Breast epithelium (tissue), 4 donors: ENCODE measurements at regions of chr10 and their contacts with region 1.

Region 1: DNA sequence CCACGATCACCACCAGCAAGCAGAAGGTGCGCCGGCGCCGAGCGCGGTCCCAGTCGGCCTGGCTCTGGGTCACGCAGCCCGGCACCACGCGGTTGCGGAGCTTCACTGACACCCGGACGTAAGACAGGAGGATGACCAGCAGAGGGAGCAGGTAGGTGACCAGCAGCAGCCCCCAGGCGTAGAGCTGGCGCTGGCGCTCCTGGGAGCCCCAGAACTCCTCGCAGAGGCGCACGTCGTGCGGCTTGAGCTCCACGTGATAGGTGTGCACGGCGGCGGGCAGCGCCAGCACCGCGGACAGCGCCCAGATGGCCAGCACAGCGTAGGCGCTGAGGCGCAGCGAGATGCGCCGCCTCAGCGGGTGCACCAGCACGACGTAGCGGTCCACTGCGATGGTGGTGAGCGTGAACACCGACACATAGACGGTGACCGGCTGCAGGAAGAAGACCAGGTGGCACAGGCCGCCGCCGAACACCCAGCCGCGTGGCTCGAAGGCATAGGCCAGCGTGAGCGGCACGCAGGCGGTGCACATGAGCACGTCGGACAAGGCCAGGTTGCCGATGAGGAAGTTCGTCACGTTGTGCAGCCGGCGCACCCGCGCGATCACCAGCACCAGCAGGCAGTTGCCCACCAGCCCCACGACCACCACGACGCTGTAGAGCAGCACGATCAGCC is 920 bp downstream of the PRLHR start:
- DNase-seq: no peak
- H3K4me3 ChIP-seq: no peak overlapping the region
- H3K27ac ChIP-seq: no peak overlapping the region
- H3K4me1 ChIP-seq: no peaks in the 10 kb centered on the region
- H3K27me3 ChIP-seq: peaks cover 0 to 79% of the 10 kb centered on the region in 2 donors
- CTCF ChIP-seq: no peak
- POLR2A ChIP-seq: no peak

Region 2: DNA sequence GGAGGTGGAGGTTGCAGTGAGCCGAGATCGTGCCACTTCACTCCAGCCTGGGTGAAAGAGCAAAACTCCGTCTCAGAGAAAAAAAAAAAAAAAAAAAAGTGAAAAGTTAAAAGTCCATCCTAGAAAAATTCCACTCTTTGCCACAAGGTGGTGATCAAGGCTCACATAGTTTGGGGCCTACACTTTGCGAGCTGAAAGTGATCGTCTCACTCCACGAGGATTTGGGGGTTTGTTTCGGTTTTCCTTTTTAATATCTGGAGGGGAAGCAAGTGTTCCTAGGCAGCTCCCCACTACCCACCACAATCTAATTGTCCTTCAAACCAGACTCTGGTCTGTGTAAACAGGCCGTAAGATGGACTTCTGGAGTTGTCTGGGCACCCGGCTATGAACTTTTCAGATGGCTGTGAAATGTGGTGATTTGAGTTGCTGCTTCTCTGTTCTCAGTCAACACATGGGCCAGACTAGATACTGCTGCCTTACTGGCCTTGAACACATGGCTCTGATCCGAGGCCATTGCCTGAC is 26.1 kb before region 1 on chr10:
- intact Hi-C with region 1: no loop called
- DNase-seq: peak in 1 of 2 donors; percentile 35
- H3K4me3 ChIP-seq: peak overlapping the region in 1 of 3 donors; percentile 29
- H3K27ac ChIP-seq: no peak overlapping the region
- H3K4me1 ChIP-seq: no peaks in the 10 kb centered on the region
- H3K27me3 ChIP-seq: no peaks in the 10 kb centered on the region
- CTCF ChIP-seq: peak; percentile 77 to 94 (median 92)
- POLR2A ChIP-seq: no peak

Region 3: DNA sequence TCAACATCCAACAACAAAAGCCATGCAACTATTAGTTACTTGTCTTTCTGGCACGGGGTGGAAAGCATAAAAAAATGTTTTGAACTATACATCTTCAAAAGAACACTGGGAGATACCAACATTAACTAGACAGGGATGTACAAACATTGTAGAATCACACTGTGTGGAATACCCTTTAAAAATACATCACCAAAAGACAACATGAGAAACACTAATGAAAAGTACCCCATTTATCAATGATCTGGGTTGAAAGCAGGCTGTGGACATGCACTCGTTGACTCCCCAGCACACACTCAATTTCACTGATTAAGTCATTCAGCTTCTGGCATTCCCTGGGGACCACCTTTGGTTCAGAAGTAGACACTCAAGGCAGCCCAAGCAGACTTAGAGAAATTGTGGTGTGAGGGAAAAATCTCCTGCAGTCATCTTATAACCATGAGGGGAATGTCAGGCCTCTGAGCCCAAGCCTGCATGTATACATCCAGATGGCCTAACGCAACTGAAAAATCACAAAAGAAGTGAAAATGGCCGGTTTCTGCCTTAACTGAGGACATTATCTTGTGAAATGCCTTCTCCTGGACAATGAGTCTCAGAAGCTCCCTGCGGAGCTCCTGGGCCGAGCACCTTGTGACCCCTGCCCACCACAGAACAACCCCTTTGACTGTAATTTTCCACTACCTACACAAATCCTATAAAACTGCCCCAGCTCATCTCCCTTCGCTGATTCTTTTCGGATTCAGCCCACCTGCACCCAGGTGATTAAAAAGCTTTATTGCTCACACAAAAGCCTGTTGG is 107.2 kb after region 1 on chr10:
- intact Hi-C with region 1: loop called (anchors 10 kb)
- DNase-seq: no peak
- H3K4me3 ChIP-seq: no peak overlapping the region
- H3K27ac ChIP-seq: no peak overlapping the region
- H3K4me1 ChIP-seq: no peaks in the 10 kb centered on the region
- H3K27me3 ChIP-seq: no peaks in the 10 kb centered on the region
- CTCF ChIP-seq: no peak
- POLR2A ChIP-seq: no peak